ENCODE measurements at regions of chr19 and their contacts with region 1.

Region 1: GRCh38 chr19:29105629-29106292 is 107.2 kb downstream of the UQCRFS1 start:
- DNase-seq: no peak
- H3K4me3 ChIP-seq: no peak overlapping the region
- H3K27ac ChIP-seq: no peak overlapping the region
- H3K4me1 ChIP-seq: no peaks in the 10 kb centered on the region
- H3K27me3 ChIP-seq: no peaks in the 10 kb centered on the region
- CTCF ChIP-seq: no peak
- POLR2A ChIP-seq: no peak

Region 2: DNA sequence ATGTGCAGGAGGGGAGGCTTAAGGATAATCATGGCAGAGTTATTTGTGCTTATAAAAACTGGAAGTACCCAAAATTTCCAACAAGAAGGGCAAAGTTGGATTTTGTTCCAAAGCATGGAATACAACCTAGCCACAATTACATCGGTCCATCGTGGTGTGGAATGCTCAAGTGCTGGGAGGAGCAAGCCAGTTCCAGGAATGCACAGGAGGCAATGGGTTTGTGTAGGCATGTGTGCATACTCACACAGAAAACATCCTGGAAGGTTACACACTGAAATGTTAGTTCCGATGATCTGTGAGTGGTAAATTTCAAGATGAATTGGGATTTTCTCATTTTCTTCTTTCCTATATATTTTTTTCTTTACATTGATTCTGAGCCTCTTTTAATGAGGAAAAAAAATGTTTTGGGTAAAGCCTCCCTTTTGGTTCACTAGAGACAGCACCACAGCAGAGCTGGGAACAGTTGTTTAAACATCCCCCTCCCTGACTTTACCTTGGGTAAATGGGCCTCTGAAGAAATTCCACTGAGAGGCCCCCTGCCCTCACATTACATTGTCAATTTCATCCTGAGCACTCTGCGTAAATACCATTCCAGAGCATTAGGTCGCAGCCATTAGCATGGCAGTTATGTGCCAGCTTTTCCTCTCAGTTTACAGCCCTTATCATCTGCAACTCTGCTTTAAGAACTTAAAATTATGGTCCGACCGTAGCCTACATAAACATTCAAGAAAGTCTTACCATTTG is 14.8 kb before region 1 on chr19:
- intact Hi-C with region 1: loop called (anchors 2 kb)
- DNase-seq: no peak
- H3K4me3 ChIP-seq: no peak overlapping the region
- H3K27ac ChIP-seq: no peak overlapping the region
- H3K4me1 ChIP-seq: no peaks in the 10 kb centered on the region
- H3K27me3 ChIP-seq: peaks cover 0 to 1% of the 10 kb centered on the region in 2 donors
- CTCF ChIP-seq: no peak
- POLR2A ChIP-seq: no peak

Measured in breast epithelium (tissue), 4 donors.